ENCODE measurements at regions of chr11 and their contacts with region 1.

Region 1: GRCh38 chr11:76670485-76671236 is at the start of gene LRRC32:
- DNase-seq: peak in 1 of 9 donors; percentile 51
- ATAC-seq: peak; percentile 63
- H3K4me3 ChIP-seq: peak within 1 kb of the TSS; percentile 35
- H3K4me3 Mint-ChIP-seq: peak within 1 kb of the TSS; percentile 59 to 77 (median 72)
- H3K27ac ChIP-seq: no peak within 1 kb of the TSS
- H3K27ac Mint-ChIP-seq: peak within 1 kb of the TSS in 1 of 9 donors; percentile 82
- H3K4me1 ChIP-seq: peaks cover 5 to 28% of the 10 kb centered on the region in 2 donors
- H3K4me1 Mint-ChIP-seq: peaks cover 8 to 31% (median 20%) of the 10 kb centered on the region in 7 donors
- H3K27me3 ChIP-seq: peaks cover 0 to 7% of the 10 kb centered on the region in 2 donors
- H3K27me3 Mint-ChIP-seq: peaks cover 30 to 37% (median 34%) of the 10 kb centered on the region in 5 donors
- total RNA-seq, gene LRRC32: 0.08 to 4.5 (median 0.61) TPM in 4 of 5 experiments, not detected in the other

Region 2: GRCh38 chr11:76598426-76598839 is 72.2 kb before region 1 on chr11:
- CTCF ChIA-PET with region 1: no interaction called
- POLR2A ChIA-PET with region 1: no interaction called
- intact Hi-C with region 1: loop called in 1 of 2 experiments (anchors 5 kb)
- DNase-seq: peak in 1 of 9 donors; percentile 21
- ATAC-seq: peak; percentile 57
- H3K4me3 ChIP-seq: no peak overlapping the region
- H3K4me3 Mint-ChIP-seq: no peak overlapping the region
- H3K27ac ChIP-seq: no peak overlapping the region
- H3K27ac Mint-ChIP-seq: no peak overlapping the region
- H3K4me1 ChIP-seq: no peaks in the 10 kb centered on the region
- H3K4me1 Mint-ChIP-seq: peaks cover 0 to 35% (median 0%) of the 10 kb centered on the region in 7 donors
- H3K27me3 ChIP-seq: no peaks in the 10 kb centered on the region
- H3K27me3 Mint-ChIP-seq: peaks cover 0 to 10% (median 0%) of the 10 kb centered on the region in 5 donors

Region 3: DNA sequence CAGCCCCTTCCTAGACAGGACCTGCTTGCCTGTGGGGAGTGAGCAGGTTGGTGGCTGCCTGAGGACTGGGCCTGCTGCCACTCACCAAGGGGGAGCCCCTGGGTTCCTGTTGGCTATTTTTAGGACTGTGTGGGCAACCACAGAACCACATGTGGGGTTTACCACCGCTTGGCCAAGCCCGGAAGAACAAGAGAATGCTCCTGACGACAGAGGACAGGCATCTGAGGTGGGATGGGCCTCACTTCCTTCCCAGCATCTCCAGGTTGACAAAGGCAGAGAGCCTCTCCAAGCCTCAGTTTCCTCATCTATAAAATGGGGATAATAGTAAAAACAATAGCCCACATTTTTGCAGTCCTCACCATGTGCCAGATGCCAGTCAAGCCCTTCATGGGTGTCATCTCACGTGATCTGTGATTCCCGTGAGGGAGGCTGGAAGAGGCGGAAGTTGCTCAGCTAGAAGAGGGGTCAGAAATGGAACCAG is 43.7 kb before region 1 on chr11:
- CTCF ChIA-PET with region 1: no interaction called
- POLR2A ChIA-PET with region 1: no interaction called
- intact Hi-C with region 1: loop called in 1 of 2 experiments (anchors 5 kb)
- DNase-seq: peak in 2 of 9 donors; percentile 24 to 76
- ATAC-seq: peak; percentile 60
- H3K4me3 ChIP-seq: no peak overlapping the region
- H3K4me3 Mint-ChIP-seq: peak overlapping the region in 1 of 10 donors; percentile 60
- H3K27ac ChIP-seq: no peak overlapping the region
- H3K27ac Mint-ChIP-seq: peak overlapping the region in 2 of 9 donors; percentile 7 to 79
- H3K4me1 ChIP-seq: peaks cover 0 to 7% of the 10 kb centered on the region in 2 donors
- H3K4me1 Mint-ChIP-seq: peaks cover 5 to 46% (median 12%) of the 10 kb centered on the region in 7 donors
- H3K27me3 ChIP-seq: no peaks in the 10 kb centered on the region
- H3K27me3 Mint-ChIP-seq: peaks cover 0 to 14% (median 6%) of the 10 kb centered on the region in 5 donors

Measured in naive thymus-derived CD4-positive, alpha-beta T cell (primary cell).